ENCODE measurements at regions of chr18 and their contacts with region 1.

Region 1: GRCh38 chr18:9038277-9038871 is 64.1 kb upstream of the NDUFV2 start:
- DNase-seq: no peak
- ATAC-seq: no peak
- H3K4me3 ChIP-seq: no peak overlapping the region
- H3K27ac ChIP-seq: no peak overlapping the region
- H3K4me1 ChIP-seq: no peaks in the 10 kb centered on the region
- H3K27me3 ChIP-seq: no peaks in the 10 kb centered on the region
- CTCF ChIP-seq: no peak

Region 2: GRCh38 chr18:8969639-8970390 is 68.6 kb before region 1 on chr18:
- intact Hi-C with region 1: loop called in 1 of 10 experiments (anchors 10 kb)
- DNase-seq: no peak
- ATAC-seq: no peak
- H3K4me3 ChIP-seq: no peak overlapping the region
- H3K27ac ChIP-seq: no peak overlapping the region
- H3K4me1 ChIP-seq: no peaks in the 10 kb centered on the region
- H3K27me3 ChIP-seq: peaks cover 0 to 16% (median 0%) of the 10 kb centered on the region in 7 donors
- CTCF ChIP-seq: no peak

Measured in heart right ventricle (tissue), 16 donors.